ENCODE measurements at regions of chr14 and their contacts with region 1.

Region 1: GRCh38 chr14:93939304-93940229 is 12.4 kb downstream of the FAM181A start:
- DNase-seq: peak; percentile 87
- H3K4me3 Mint-ChIP-seq: peak overlapping the region; percentile 64
- H3K27ac Mint-ChIP-seq: peak overlapping the region; percentile 88
- H3K4me1 Mint-ChIP-seq: peaks cover 24% of the 10 kb centered on the region
- H3K27me3 Mint-ChIP-seq: no peaks in the 10 kb centered on the region

Region 2: DNA sequence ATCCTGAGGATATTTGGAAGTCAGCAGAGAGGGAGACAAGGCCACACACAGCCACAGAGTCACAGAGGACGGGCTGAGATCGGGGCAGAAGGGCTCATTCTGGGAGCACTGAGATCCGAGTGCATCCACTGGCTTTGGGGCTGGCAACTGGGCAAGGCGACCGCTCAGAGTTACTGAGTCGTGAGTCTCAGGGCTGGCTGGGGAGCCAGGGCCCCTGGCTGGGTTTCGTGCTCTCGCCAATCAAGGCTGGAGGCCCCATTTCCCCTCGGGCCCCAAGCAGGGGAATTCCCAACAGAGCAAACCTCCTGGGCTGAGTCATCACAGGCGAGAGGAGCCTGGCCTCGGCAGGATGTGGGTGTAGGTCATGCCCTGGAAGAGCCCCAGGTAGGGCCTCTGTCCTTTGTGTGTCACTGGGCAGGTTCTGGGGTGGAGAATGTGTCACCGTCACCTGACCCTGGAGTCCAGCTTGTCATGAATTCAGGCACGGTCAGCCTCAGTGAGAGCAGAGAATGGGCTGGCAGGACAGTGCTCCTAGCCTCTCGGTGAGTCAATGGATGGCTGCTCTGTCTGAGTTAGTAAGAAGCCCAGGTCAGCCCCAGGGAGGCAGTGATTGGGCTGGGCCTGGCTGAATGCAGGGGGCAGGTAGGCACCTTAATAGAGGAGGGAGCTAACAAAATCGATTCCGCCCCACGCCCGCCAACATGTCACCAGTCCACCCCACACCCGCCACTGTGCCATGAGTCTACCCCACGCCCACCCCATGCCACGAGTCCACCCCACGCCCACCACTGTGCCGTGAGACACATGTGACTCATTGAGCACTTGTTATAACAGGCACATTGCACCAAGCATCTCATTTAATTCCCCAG is 19.9 kb after region 1 on chr14:
- intact Hi-C with region 1: loop called (anchors 1 kb)
- DNase-seq: peak; percentile 94
- H3K4me3 Mint-ChIP-seq: peak overlapping the region; percentile 84
- H3K27ac Mint-ChIP-seq: peak overlapping the region; percentile 100
- H3K4me1 Mint-ChIP-seq: peaks cover 97% of the 10 kb centered on the region
- H3K27me3 Mint-ChIP-seq: no peaks in the 10 kb centered on the region

Region 3: GRCh38 chr14:93975791-93976476 is 36.4 kb after region 1 on chr14:
- intact Hi-C with region 1: loop called (anchors 1 kb)
- DNase-seq: peak; percentile 50
- H3K4me3 Mint-ChIP-seq: peak overlapping the region; percentile 76
- H3K27ac Mint-ChIP-seq: peak overlapping the region; percentile 99
- H3K4me1 Mint-ChIP-seq: peaks cover 96% of the 10 kb centered on the region
- H3K27me3 Mint-ChIP-seq: peaks cover 2% of the 10 kb centered on the region

Region 4: GRCh38 chr14:93994919-93995682 is 55.5 kb after region 1 on chr14:
- intact Hi-C with region 1: no loop called
- DNase-seq: no peak
- H3K4me3 Mint-ChIP-seq: no peak overlapping the region
- H3K27ac Mint-ChIP-seq: peak overlapping the region; percentile 67
- H3K4me1 Mint-ChIP-seq: peaks cover 36% of the 10 kb centered on the region
- H3K27me3 Mint-ChIP-seq: peaks cover 4% of the 10 kb centered on the region

Region 5: GRCh38 chr14:94026173-94026888 is 86.8 kb after region 1 on chr14 and contains the start of gene OTUB2:
- intact Hi-C with region 1: loop called (anchors 1 kb)
- DNase-seq: peak; percentile 96
- H3K4me3 Mint-ChIP-seq: peak within 1 kb of the TSS; percentile 85
- H3K27ac Mint-ChIP-seq: peak within 1 kb of the TSS; percentile 60
- H3K4me1 Mint-ChIP-seq: peaks cover 39% of the 10 kb centered on the region
- H3K27me3 Mint-ChIP-seq: no peaks in the 10 kb centered on the region
- total RNA-seq, gene OTUB2: 1.5 TPM in 2 replicates

Region 6: DNA sequence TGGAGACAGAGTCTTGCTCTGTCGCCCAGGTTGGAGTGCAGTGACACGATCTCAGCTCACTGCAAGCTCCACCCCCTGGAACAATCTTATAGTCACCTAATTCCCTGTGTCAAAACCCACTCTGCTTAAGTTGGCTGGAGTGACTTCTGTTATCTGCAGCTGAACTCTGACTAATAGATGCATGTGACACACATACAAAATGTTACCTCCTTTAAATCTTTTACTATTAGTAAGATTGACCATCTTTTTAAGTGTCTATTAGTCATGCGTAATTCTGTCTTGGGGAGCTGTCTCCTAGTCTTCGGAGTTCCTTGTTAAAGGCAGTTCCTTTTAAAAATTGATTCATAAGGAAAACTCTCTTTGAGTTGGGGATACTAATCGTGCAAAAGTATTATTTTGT is 148.9 kb after region 1 on chr14:
- intact Hi-C with region 1: no loop called
- DNase-seq: no peak
- H3K4me3 Mint-ChIP-seq: no peak overlapping the region
- H3K27ac Mint-ChIP-seq: no peak overlapping the region
- H3K4me1 Mint-ChIP-seq: no peaks in the 10 kb centered on the region
- H3K27me3 Mint-ChIP-seq: no peaks in the 10 kb centered on the region

Region 7: GRCh38 chr14:94180655-94181271 is 241.2 kb after region 1 on chr14:
- intact Hi-C with region 1: loop called (anchors 2 kb)
- DNase-seq: no peak
- H3K4me3 Mint-ChIP-seq: peak overlapping the region; percentile 11
- H3K27ac Mint-ChIP-seq: peak overlapping the region; percentile 51
- H3K4me1 Mint-ChIP-seq: peaks cover 11% of the 10 kb centered on the region
- H3K27me3 Mint-ChIP-seq: peaks cover 30% of the 10 kb centered on the region